Psoas muscle (tissue), 8 donors: ENCODE measurements at regions of chr6 and their contacts with region 1.

Region 1: DNA sequence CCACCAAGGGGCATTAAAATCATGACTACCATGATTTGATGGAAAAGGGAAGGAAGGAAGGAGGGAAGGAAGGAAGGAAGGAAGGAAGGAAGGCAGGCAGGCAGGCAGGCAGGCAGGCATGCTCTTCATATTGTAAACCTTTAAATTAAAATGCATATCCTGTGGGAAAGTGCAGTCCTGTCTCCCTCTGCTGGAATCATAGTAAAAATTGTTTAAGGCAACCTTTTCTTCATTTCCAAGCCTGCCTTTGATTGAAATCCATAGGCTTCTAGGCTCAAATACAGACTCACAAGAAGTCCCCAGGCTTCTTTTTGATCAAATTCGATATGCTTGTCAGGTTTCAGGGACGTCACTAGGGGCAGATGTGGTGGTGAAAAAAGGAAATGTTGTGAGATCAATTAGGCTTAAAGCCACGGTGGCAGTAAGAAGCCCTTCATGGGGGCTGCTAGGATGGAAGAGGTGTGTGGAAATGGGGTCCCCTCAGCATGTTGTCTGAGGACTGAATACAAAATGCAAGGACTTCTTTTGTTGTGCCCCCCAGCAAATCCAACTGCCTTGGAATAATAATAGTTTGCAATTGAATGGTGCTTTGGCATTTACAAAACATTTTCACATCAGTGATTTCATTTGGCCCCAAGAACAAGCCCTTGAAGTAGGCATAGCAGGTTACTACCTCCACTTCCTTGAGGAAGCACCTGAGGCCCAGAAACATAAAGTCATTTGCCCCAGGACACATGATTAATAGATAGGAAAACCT is 25.6 kb upstream of the GABRR1 start:
- DNase-seq: no peak
- ATAC-seq: peak in 3 of 4 donors; percentile 53 to 87 (median 65)
- H3K4me3 ChIP-seq: no peak overlapping the region
- H3K27ac ChIP-seq: peak overlapping the region; percentile 27
- H3K4me1 ChIP-seq: peaks cover 3% of the 10 kb centered on the region
- H3K27me3 ChIP-seq: no peaks in the 10 kb centered on the region
- CTCF ChIP-seq: peak; percentile 56

Region 2: GRCh38 chr6:89122625-89123024 is 120.1 kb before region 1 on chr6:
- intact Hi-C with region 1: loop called (anchors 1 to 2 kb)
- DNase-seq: no peak
- ATAC-seq: peak; percentile 56 to 75 (median 70)
- H3K4me3 ChIP-seq: no peak overlapping the region
- H3K27ac ChIP-seq: no peak overlapping the region
- H3K4me1 ChIP-seq: peaks cover 12% of the 10 kb centered on the region
- H3K27me3 ChIP-seq: no peaks in the 10 kb centered on the region
- CTCF ChIP-seq: peak; percentile 66

Region 3: GRCh38 chr6:89339565-89339964 is 96.8 kb after region 1 on chr6:
- intact Hi-C with region 1: no loop called
- DNase-seq: no peak
- ATAC-seq: peak in 3 of 4 donors; percentile 61 to 86 (median 62)
- H3K4me3 ChIP-seq: no peak overlapping the region
- H3K27ac ChIP-seq: no peak overlapping the region
- H3K4me1 ChIP-seq: no peaks in the 10 kb centered on the region
- H3K27me3 ChIP-seq: no peaks in the 10 kb centered on the region
- CTCF ChIP-seq: no peak

Region 4: GRCh38 chr6:89398762-89399525 is 156.2 kb after region 1 on chr6:
- intact Hi-C with region 1: no loop called
- DNase-seq: no peak
- ATAC-seq: no peak
- H3K4me3 ChIP-seq: no peak overlapping the region
- H3K27ac ChIP-seq: no peak overlapping the region
- H3K4me1 ChIP-seq: peaks cover 27% of the 10 kb centered on the region
- H3K27me3 ChIP-seq: no peaks in the 10 kb centered on the region
- CTCF ChIP-seq: no peak